Heart right ventricle (tissue), 16 donors: ENCODE measurements at regions of chr6 and their contacts with region 1.

Region 1: GRCh38 chr6:17998456-17998855 is 11.0 kb upstream of the KIF13A start:
- DNase-seq: no peak
- ATAC-seq: no peak
- H3K4me3 ChIP-seq: no peak overlapping the region
- H3K27ac ChIP-seq: no peak overlapping the region
- H3K4me1 ChIP-seq: no peaks in the 10 kb centered on the region
- H3K27me3 ChIP-seq: no peaks in the 10 kb centered on the region
- CTCF ChIP-seq: no peak

Region 2: GRCh38 chr6:17845598-17845997 is 152.9 kb before region 1 on chr6:
- intact Hi-C with region 1: loop called in 1 of 10 experiments (anchors 10 kb)
- DNase-seq: no peak
- ATAC-seq: peak in 2 of 8 donors; percentile 14 to 37
- H3K4me3 ChIP-seq: no peak overlapping the region
- H3K27ac ChIP-seq: no peak overlapping the region
- H3K4me1 ChIP-seq: peaks cover 0 to 4% (median 0%) of the 10 kb centered on the region in 9 donors
- H3K27me3 ChIP-seq: no peaks in the 10 kb centered on the region
- CTCF ChIP-seq: peak in 3 of 9 donors; percentile 14 to 23 (median 15)

Region 3: GRCh38 chr6:18110162-18110561 is 111.7 kb after region 1 on chr6:
- intact Hi-C with region 1: loop called in 3 of 10 experiments (anchors 5 to 10 kb)
- DNase-seq: no peak
- ATAC-seq: peak in 1 of 8 donors; percentile 42
- H3K4me3 ChIP-seq: no peak overlapping the region
- H3K27ac ChIP-seq: no peak overlapping the region
- H3K4me1 ChIP-seq: no peaks in the 10 kb centered on the region
- H3K27me3 ChIP-seq: no peaks in the 10 kb centered on the region
- CTCF ChIP-seq: no peak

Region 4: DNA sequence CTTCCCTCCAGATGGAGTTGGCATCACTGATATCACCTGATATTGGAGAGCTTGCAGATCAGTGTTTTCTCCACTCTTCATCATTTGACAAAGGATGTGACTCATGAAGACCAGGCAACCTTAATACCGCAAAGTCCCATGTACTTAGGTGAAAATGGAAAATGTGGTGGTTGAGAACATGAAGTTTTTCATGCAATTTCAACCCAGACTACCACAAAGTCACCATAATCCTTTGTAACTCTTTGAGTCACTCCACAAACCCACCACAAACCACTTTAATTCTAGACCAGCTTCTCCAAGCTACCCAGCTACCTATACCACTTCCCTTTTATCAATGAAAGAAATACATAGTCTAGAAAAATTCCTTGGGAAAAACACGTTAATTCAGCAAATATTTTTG is 116.9 kb after region 1 on chr6:
- intact Hi-C with region 1: loop called in 3 of 10 experiments (anchors 5 to 10 kb)
- DNase-seq: no peak
- ATAC-seq: no peak
- H3K4me3 ChIP-seq: no peak overlapping the region
- H3K27ac ChIP-seq: no peak overlapping the region
- H3K4me1 ChIP-seq: no peaks in the 10 kb centered on the region
- H3K27me3 ChIP-seq: no peaks in the 10 kb centered on the region
- CTCF ChIP-seq: no peak